ENCODE measurements at regions of chr11 and their contacts with region 1.

Region 1: DNA sequence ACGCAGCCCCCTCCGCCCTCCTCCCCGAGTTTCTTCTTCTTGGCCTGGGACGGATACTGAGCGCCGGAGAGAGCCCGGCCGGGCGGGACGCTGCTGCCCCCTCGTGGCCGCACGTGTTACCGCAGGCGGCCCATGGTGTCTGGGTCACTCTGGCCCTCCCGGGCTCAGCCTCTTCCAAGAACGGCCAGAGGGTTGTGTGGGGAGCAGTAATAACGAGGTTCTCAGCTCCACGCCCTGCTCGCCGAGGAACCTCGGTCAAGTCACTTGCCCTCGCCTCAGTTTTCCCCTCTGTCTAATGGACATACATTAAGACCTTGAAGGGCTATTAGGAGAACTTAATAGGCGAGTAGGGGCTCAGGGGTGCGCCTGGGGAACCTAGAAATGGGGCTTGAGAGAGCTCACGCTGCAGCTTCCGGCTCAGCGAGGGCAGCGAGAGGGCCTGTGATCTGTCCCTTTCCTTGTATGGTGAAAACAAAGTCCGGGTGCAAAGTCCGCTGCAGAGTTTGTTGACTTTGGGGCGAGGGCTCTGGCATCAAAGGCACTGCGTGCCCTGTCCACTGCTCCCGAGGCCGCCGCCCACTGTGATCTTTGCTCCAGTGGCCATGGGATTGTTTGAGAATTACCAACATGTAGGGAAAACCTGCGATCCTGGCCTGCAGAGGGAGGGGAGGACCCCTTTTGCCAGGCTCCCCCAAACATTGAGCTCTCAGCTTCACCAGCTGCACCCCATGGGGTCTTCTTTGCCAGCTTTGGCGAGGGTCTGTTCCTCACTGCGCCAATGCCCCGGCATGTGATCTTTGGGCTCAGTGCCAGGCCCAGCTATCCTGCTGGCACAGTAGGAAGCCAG is 14.4 kb upstream of the LRP5 start:
- DNase-seq: peak; percentile 98
- ATAC-seq: peak; percentile 85
- H3K4me3 ChIP-seq: peak overlapping the region; percentile 68 to 83 (median 69)
- H3K27ac ChIP-seq: peak overlapping the region; percentile 100
- H3K4me1 ChIP-seq: peaks cover 59% of the 10 kb centered on the region
- H3K27me3 ChIP-seq: no peaks in the 10 kb centered on the region; a peak in 1 of 5 replicates
- CTCF ChIP-seq: peak; percentile 97
- EP300 ChIP-seq: peak; percentile 98
- POLR2A ChIP-seq: peak; percentile 73 to 81
- RAD21 ChIP-seq: peak; percentile 96

Region 2: GRCh38 chr11:68020575-68020974 is 277.5 kb before region 1 on chr11:
- CTCF ChIA-PET with region 1: no interaction called
- POLR2A ChIA-PET with region 1: no interaction called
- in situ Hi-C with region 1: no loop called
- intact Hi-C with region 1: no loop called
- DNase-seq: no peak
- ATAC-seq: peak; percentile 61
- H3K4me3 ChIP-seq: peak overlapping the region in 1 of 3 experiments; percentile 55; a peak in 2 of 6 replicates
- H3K27ac ChIP-seq: no peak overlapping the region
- H3K4me1 ChIP-seq: peaks cover 62% of the 10 kb centered on the region
- H3K27me3 ChIP-seq: no peaks in the 10 kb centered on the region
- CTCF ChIP-seq: peak; percentile 78
- EP300 ChIP-seq: no peak
- POLR2A ChIP-seq: no peak
- RAD21 ChIP-seq: 0 out of 2 replicates have a peak, but pooled peaks have one; percentile 12

Region 3: DNA sequence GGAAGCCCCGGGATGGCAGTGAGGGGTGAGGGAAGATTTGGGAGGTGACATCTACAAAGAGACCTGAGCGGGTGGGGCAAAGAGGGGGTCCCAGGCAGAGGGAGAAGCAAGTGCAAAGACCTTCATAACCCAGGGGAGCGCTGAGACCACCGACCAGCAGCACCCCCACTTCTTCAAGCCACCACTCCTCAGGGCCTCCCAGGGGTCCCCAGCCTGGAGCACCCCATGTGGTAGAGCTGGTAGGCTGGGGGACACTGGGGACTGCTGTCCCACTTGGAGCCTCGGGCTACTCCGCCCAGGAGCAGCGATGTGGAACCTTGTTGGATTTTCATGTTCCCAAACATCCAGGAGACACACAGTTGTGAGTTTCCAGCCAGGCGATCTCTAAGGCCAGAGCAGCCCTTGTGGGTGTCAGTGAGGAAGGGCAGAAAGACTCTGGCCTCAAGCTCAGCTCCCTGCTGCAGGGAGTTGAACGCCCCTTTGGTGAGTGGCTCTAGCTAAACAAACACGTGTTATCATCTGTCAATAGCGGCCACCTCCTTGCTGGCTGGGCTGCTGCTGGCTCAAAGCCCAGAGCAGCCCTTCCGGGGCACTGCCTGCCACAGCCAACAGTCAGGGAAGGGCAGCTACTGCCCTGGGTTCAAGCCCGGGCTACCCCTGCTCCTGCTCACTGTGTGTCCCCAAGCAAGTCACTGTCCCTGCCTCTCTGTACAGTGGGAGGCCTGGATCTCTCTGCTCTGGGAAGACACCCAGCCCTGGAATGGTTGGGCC is 151.1 kb before region 1 on chr11:
- CTCF ChIA-PET with region 1: no interaction called
- POLR2A ChIA-PET with region 1: interaction called, 16 read pairs
- in situ Hi-C with region 1: no loop called
- intact Hi-C with region 1: no loop called
- DNase-seq: peak; percentile 97
- ATAC-seq: peak; percentile 89
- H3K4me3 ChIP-seq: peak overlapping the region; percentile 43 to 76 (median 44)
- H3K27ac ChIP-seq: peak overlapping the region; percentile 98
- H3K4me1 ChIP-seq: peaks cover 84% of the 10 kb centered on the region
- H3K27me3 ChIP-seq: no peaks in the 10 kb centered on the region; a peak in 1 of 5 replicates
- CTCF ChIP-seq: peak; percentile 35; the same call in 1 of the 2 replicates
- EP300 ChIP-seq: peak in 1 of 2 experiments; percentile 92
- POLR2A ChIP-seq: peak; percentile 94 to 97
- RAD21 ChIP-seq: peak; percentile 73; the same call in 1 of the 2 replicates

Region 4: DNA sequence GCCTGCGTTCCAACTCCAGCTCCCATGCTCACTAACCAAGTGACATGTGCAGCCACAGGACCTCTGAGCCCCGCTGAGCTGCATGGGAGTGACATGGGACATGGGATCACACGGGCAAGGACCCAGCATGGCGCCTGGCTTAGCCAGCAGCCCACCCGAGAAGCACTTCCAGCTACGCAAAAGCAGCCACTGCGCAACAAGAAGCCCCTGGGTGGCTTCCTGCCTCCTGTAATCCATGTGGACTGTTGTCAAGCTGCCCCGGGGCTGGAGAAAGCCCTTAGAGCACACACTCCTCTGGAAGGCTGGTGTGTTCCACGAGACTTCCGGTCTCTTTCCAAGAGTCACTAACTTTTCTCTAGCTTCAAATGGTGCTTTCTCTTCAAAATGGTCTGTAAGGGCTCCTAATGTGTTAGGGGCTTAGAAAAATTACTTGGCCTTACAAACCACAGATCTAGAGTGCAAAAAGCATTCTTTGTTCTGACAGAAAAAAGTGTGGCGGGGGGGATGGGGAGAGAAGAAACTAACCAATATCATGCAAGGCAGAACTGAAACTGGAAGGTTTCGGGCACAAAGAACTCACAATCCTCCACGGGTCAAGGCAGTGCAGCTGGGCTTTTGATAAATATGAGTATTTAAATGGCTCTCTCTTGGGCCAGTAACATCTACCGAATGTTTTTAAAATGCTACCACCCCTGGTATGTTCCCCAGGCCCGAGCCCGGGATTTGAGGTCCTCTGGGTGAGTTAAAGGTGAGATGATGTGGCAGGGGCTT is 31.7 kb before region 1 on chr11:
- CTCF ChIA-PET with region 1: interaction called, 22 read pairs
- POLR2A ChIA-PET with region 1: interaction called, 220 read pairs
- in situ Hi-C with region 1: no loop called
- intact Hi-C with region 1: loop called (anchors 1 kb)
- DNase-seq: no peak
- ATAC-seq: no peak
- H3K4me3 ChIP-seq: no peak overlapping the region
- H3K27ac ChIP-seq: no peak overlapping the region
- H3K4me1 ChIP-seq: peaks cover 34% of the 10 kb centered on the region
- H3K27me3 ChIP-seq: no peaks in the 10 kb centered on the region; a peak in 1 of 5 replicates
- CTCF ChIP-seq: no peak
- EP300 ChIP-seq: no peak
- POLR2A ChIP-seq: 0 out of 4 replicates have a peak, but pooled peaks of 1 of the 2 experiments have one; percentile 36
- RAD21 ChIP-seq: no peak

Region 5: GRCh38 chr11:68312117-68312779 is 14.2 kb after region 1 on chr11 and contains the start of gene LRP5:
- CTCF ChIA-PET with region 1: interaction called, 3 read pairs
- POLR2A ChIA-PET with region 1: interaction called, 209 read pairs
- in situ Hi-C with region 1: no loop called
- intact Hi-C with region 1: loop called (anchors 2 kb)
- DNase-seq: no peak
- ATAC-seq: no peak
- H3K4me3 ChIP-seq: peak within 1 kb of the TSS; percentile 89 to 98 (median 95)
- H3K27ac ChIP-seq: peak within 1 kb of the TSS; percentile 91
- H3K4me1 ChIP-seq: peaks cover 66% of the 10 kb centered on the region
- H3K27me3 ChIP-seq: no peaks in the 10 kb centered on the region; a peak in 1 of 5 replicates
- CTCF ChIP-seq: no peak
- EP300 ChIP-seq: no peak
- POLR2A ChIP-seq: peak in 1 of 2 experiments; percentile 31; a peak in 2 of 4 replicates
- RAD21 ChIP-seq: no peak
- total RNA-seq, gene LRP5: 23.6 and 40.4 TPM in 2 replicates

Region 6: GRCh38 chr11:68342459-68343158 is 44.6 kb after region 1 on chr11:
- CTCF ChIA-PET with region 1: no interaction called
- POLR2A ChIA-PET with region 1: interaction called, 20 read pairs
- in situ Hi-C with region 1: no loop called
- intact Hi-C with region 1: loop called (anchors 1 kb)
- DNase-seq: no peak
- ATAC-seq: peak; percentile 17
- H3K4me3 ChIP-seq: no peak overlapping the region
- H3K27ac ChIP-seq: peak overlapping the region; percentile 52
- H3K4me1 ChIP-seq: peaks cover 98% of the 10 kb centered on the region
- H3K27me3 ChIP-seq: no peaks in the 10 kb centered on the region
- CTCF ChIP-seq: no peak
- EP300 ChIP-seq: no peak
- POLR2A ChIP-seq: no peak
- RAD21 ChIP-seq: no peak

Region 7: GRCh38 chr11:68447015-68447801 is 149.2 kb after region 1 on chr11:
- CTCF ChIA-PET with region 1: no interaction called
- POLR2A ChIA-PET with region 1: no interaction called
- in situ Hi-C with region 1: no loop called
- intact Hi-C with region 1: loop called (anchors 1 kb)
- DNase-seq: peak; percentile 59
- ATAC-seq: peak; percentile 91
- H3K4me3 ChIP-seq: no peak overlapping the region
- H3K27ac ChIP-seq: no peak overlapping the region
- H3K4me1 ChIP-seq: no peaks in the 10 kb centered on the region
- H3K27me3 ChIP-seq: no peaks in the 10 kb centered on the region
- CTCF ChIP-seq: peak; percentile 93
- EP300 ChIP-seq: no peak
- POLR2A ChIP-seq: no peak
- RAD21 ChIP-seq: peak; percentile 76